ENCODE measurements at regions of chr12 and their contacts with region 1.

Region 1: GRCh38 chr12:56677680-56678079 is 10.4 kb downstream of the PTGES3 start:
- DNase-seq: peak; percentile 57
- ATAC-seq: peak; percentile 78
- H3K4me3 Mint-ChIP-seq: peak overlapping the region; percentile 32
- H3K27ac Mint-ChIP-seq: peak overlapping the region; percentile 75
- H3K4me1 Mint-ChIP-seq: peaks cover 69% of the 10 kb centered on the region
- H3K27me3 Mint-ChIP-seq: no peaks in the 10 kb centered on the region
- CTCF ChIP-seq: no peak

Region 2: GRCh38 chr12:56636675-56637540 is 40.8 kb before region 1 on chr12:
- CTCF ChIA-PET with region 1: interaction called, 5 read pairs
- POLR2A ChIA-PET with region 1: interaction called, 10 read pairs
- intact Hi-C with region 1: no loop called
- DNase-seq: peak; percentile 99
- ATAC-seq: peak; percentile 65
- H3K4me3 Mint-ChIP-seq: peak overlapping the region; percentile 91
- H3K27ac Mint-ChIP-seq: peak overlapping the region; percentile 98
- H3K4me1 Mint-ChIP-seq: peaks cover 58% of the 10 kb centered on the region
- H3K27me3 Mint-ChIP-seq: no peaks in the 10 kb centered on the region
- CTCF ChIP-seq: peak; percentile 66

Region 3: GRCh38 chr12:56645717-56646446 is 31.8 kb before region 1 on chr12 and contains the start of gene ATP5F1B:
- CTCF ChIA-PET with region 1: no interaction called
- POLR2A ChIA-PET with region 1: interaction called, 22 read pairs
- intact Hi-C with region 1: no loop called
- DNase-seq: peak; percentile 97
- ATAC-seq: peak; percentile 98
- H3K4me3 Mint-ChIP-seq: peak within 1 kb of the TSS; percentile 86
- H3K27ac Mint-ChIP-seq: peak within 1 kb of the TSS; percentile 97
- H3K4me1 Mint-ChIP-seq: peaks cover 33% of the 10 kb centered on the region
- H3K27me3 Mint-ChIP-seq: no peaks in the 10 kb centered on the region
- CTCF ChIP-seq: no peak
- total RNA-seq, gene ATP5F1B: 859 to 869 TPM

Region 4: DNA sequence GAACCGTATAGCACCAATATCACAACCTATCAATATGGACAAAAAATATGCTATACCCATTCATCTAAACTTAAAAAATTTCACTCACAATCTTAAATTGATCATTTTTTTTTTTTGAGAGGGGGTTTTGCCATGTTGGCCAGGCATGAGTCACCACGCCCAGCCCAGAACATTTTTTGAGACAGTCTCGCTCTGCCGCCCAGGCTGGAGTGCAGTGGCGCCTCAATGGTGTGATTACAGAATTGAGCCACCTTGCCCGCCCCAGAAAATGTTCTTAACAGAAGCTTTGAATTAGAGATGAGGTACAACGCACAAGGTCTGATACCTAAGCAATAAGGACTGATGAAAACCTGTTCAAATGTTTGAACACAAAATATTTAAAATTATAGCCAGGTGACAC is 16.1 kb before region 1 on chr12:
- CTCF ChIA-PET with region 1: no interaction called
- POLR2A ChIA-PET with region 1: interaction called, 20 read pairs
- intact Hi-C with region 1: no loop called
- DNase-seq: peak; percentile 38
- ATAC-seq: no peak
- H3K4me3 Mint-ChIP-seq: no peak overlapping the region
- H3K27ac Mint-ChIP-seq: peak overlapping the region; percentile 69
- H3K4me1 Mint-ChIP-seq: peaks cover 27% of the 10 kb centered on the region
- H3K27me3 Mint-ChIP-seq: no peaks in the 10 kb centered on the region
- CTCF ChIP-seq: no peak

Region 5: GRCh38 chr12:56766535-56766934 is 88.9 kb after region 1 on chr12:
- CTCF ChIA-PET with region 1: no interaction called
- POLR2A ChIA-PET with region 1: no interaction called
- intact Hi-C with region 1: no loop called
- DNase-seq: no peak
- ATAC-seq: no peak
- H3K4me3 Mint-ChIP-seq: no peak overlapping the region
- H3K27ac Mint-ChIP-seq: no peak overlapping the region
- H3K4me1 Mint-ChIP-seq: no peaks in the 10 kb centered on the region
- H3K27me3 Mint-ChIP-seq: no peaks in the 10 kb centered on the region
- CTCF ChIP-seq: no peak

Region 6: DNA sequence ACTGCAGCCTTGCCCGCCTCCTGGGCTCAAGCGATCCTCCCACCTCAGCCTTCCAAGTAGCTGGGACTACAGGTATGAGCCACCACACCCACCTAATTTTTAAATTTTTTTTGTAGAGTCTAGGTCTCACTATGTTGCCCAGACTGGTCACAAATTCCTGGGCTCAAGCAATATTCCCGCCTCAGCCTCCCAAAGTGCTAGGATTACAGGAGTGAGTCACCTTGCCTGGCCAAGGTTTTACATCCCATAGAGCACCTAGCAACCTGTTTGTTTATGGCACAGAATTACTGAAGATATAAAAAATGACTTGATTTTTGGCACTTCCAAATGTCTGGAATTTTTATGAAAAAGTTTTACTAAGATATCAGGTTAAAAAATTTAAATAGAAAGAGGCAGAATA is 355.7 kb after region 1 on chr12:
- CTCF ChIA-PET with region 1: no interaction called
- POLR2A ChIA-PET with region 1: no interaction called
- intact Hi-C with region 1: no loop called
- DNase-seq: no peak
- ATAC-seq: no peak
- H3K4me3 Mint-ChIP-seq: no peak overlapping the region
- H3K27ac Mint-ChIP-seq: no peak overlapping the region
- H3K4me1 Mint-ChIP-seq: peaks cover 17% of the 10 kb centered on the region
- H3K27me3 Mint-ChIP-seq: no peaks in the 10 kb centered on the region
- CTCF ChIP-seq: no peak